BJ (cell line): ENCODE measurements at regions of chr16 and their contacts with region 1.

Region 1: GRCh38 chr16:84186685-84187437 is at the start of gene TAF1C:
- DNase-seq: peak; percentile 64
- H3K4me3 ChIP-seq: peak within 1 kb of the TSS; percentile 99
- H3K27me3 ChIP-seq: no peaks in the 10 kb centered on the region
- CTCF ChIP-seq: peak; percentile 97
- polyA plus RNA-seq, gene TAF1C: 12.8 and 23.4 TPM in 2 replicates

Region 2: DNA sequence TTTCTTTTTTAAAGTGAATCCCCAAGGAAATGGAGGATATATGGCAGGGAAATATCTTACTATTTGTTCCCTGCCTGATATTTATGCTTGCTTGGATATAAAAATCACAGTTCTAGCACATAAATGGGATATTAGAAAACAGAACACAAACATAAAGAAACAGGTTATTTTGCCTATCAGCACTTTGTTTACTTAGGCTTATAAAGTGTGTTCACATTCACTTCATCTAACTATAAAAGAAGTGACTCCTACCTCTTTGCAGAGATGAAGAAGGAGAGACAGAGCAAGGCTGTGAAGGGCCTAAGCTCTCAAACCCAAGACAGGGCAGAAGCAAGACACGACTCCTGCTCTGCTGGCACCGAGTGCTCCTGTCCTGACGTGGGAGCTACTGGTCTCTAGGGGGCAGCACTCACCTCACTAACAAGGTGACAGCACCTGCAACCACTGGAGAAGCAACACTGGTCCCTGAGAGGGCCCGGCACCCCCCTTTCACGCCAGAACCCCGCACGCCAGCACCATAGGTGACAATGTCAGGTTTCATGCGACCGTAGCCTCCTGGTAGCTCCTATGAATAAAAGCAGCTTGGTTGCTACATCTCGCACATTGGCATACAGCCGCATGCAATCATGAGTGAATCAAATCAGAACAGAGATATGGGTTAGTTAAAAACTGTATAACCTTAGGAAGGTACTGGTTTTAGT is 102.1 kb before region 1 on chr16:
- CTCF ChIA-PET with region 1: interaction called, 60 read pairs
- POLR2A ChIA-PET with region 1: no interaction called
- DNase-seq: no peak
- H3K4me3 ChIP-seq: no peak overlapping the region
- H3K27me3 ChIP-seq: no peaks in the 10 kb centered on the region
- CTCF ChIP-seq: peak; percentile 83

Region 3: GRCh38 chr16:84116720-84117493 is 70.0 kb before region 1 on chr16 and contains the start of gene MBTPS1:
- CTCF ChIA-PET with region 1: interaction called, 10 read pairs
- POLR2A ChIA-PET with region 1: no interaction called
- DNase-seq: peak; percentile 84
- H3K4me3 ChIP-seq: peak within 1 kb of the TSS; percentile 99
- H3K27me3 ChIP-seq: no peaks in the 10 kb centered on the region
- CTCF ChIP-seq: no peak
- polyA plus RNA-seq, gene MBTPS1: 72.6 and 89.7 TPM in 2 replicates

Region 4: GRCh38 chr16:84138824-84139627 is 47.8 kb before region 1 on chr16:
- CTCF ChIA-PET with region 1: interaction called, 14 read pairs
- POLR2A ChIA-PET with region 1: interaction called, 4 read pairs
- DNase-seq: no peak
- H3K4me3 ChIP-seq: no peak overlapping the region
- H3K27me3 ChIP-seq: no peaks in the 10 kb centered on the region
- CTCF ChIP-seq: no peak

Region 5: GRCh38 chr16:84175350-84176081 is 11.3 kb before region 1 on chr16:
- CTCF ChIA-PET with region 1: interaction called, 42 read pairs
- POLR2A ChIA-PET with region 1: no interaction called
- DNase-seq: no peak
- H3K4me3 ChIP-seq: no peak overlapping the region
- H3K27me3 ChIP-seq: no peaks in the 10 kb centered on the region
- CTCF ChIP-seq: no peak